ENCODE measurements at regions of chr7 and their contacts with region 1.

Region 1: GRCh38 chr7:100874577-100875355 is at the start of gene SRRT:
- DNase-seq: peak; percentile 97
- ATAC-seq: peak; percentile 93
- H3K4me3 Mint-ChIP-seq: peak within 1 kb of the TSS; percentile 97
- H3K27ac Mint-ChIP-seq: peak within 1 kb of the TSS; percentile 98
- H3K4me1 Mint-ChIP-seq: peaks cover 41% of the 10 kb centered on the region
- H3K27me3 Mint-ChIP-seq: no peaks in the 10 kb centered on the region
- total RNA-seq, gene SRRT: 251 to 255 TPM

Region 2: GRCh38 chr7:100745184-100745583 is 129.6 kb before region 1 on chr7:
- POLR2A ChIA-PET with region 1: no interaction called
- DNase-seq: peak; percentile 51
- ATAC-seq: peak; percentile 78
- H3K4me3 Mint-ChIP-seq: peak overlapping the region; percentile 88
- H3K27ac Mint-ChIP-seq: peak overlapping the region; percentile 69
- H3K4me1 Mint-ChIP-seq: peaks cover 4% of the 10 kb centered on the region
- H3K27me3 Mint-ChIP-seq: peaks cover 22% of the 10 kb centered on the region

Region 3: GRCh38 chr7:100852048-100852872 is 22.5 kb before region 1 on chr7 and contains the start of gene SLC12A9:
- POLR2A ChIA-PET with region 1: interaction called, 25 read pairs
- DNase-seq: peak; percentile 94
- ATAC-seq: peak; percentile 98
- H3K4me3 Mint-ChIP-seq: peak within 1 kb of the TSS; percentile 94
- H3K27ac Mint-ChIP-seq: peak within 1 kb of the TSS; percentile 80
- H3K4me1 Mint-ChIP-seq: peaks cover 10% of the 10 kb centered on the region
- H3K27me3 Mint-ChIP-seq: no peaks in the 10 kb centered on the region
- total RNA-seq, gene SLC12A9: 39.0 to 41.2 TPM

Region 4: GRCh38 chr7:100884736-100885439 is 10.1 kb after region 1 on chr7:
- POLR2A ChIA-PET with region 1: interaction called, 176 read pairs
- DNase-seq: no peak
- ATAC-seq: no peak
- H3K4me3 Mint-ChIP-seq: peak overlapping the region; percentile 16
- H3K27ac Mint-ChIP-seq: peak overlapping the region; percentile 46
- H3K4me1 Mint-ChIP-seq: peaks cover 36% of the 10 kb centered on the region
- H3K27me3 Mint-ChIP-seq: no peaks in the 10 kb centered on the region

Region 5: DNA sequence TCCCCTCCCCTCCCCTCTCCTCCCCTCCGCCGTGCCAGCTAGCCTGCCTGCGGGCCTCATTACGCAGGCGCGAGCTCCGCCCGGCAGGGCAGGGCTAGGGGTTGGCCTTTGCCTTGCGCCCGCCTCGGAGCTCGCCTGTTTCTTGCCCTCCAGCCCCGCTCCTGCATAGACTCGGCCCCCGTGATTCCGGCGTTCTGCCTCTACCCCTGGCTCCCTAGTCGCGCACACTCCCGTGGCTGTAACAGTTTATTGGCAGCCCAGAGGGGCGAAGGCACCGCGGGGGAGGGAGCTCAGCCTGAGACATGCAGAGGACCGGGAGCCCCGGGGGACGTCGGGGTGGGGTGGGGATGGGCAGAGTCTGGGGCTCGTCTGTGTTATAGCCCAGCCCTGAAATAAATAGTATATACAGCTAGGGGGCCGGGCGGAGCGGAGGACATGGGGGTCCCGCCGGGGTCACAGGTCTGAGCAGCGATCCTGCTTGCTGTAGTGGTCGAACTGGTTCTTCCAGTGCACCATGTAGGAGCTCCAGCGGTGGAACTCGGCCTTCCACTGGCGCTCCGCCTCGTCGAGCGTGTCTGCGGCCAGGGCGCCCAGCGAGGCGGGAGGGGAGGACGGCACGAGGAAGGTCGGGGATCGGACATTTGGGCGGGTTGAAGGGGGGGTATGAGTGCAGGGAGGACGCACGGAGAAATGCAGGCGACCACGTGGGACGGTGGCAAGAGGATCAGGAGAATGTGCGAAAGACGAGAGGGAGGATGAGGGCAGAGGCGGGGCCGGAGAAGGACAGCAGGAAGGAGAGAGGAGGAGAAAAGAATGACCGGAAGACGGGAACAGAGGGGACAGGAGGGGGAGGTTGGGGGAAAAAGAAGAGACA is 15.2 kb after region 1 on chr7:
- POLR2A ChIA-PET with region 1: interaction called, 176 read pairs
- DNase-seq: peak; percentile 93
- ATAC-seq: peak; percentile 91
- H3K4me3 Mint-ChIP-seq: peak overlapping the region; percentile 85
- H3K27ac Mint-ChIP-seq: peak overlapping the region; percentile 69
- H3K4me1 Mint-ChIP-seq: peaks cover 36% of the 10 kb centered on the region
- H3K27me3 Mint-ChIP-seq: peaks cover 24% of the 10 kb centered on the region

Region 6: GRCh38 chr7:101217388-101218235 is 342.8 kb after region 1 on chr7 and contains the starts of genes PLOD3 and ZNHIT1:
- POLR2A ChIA-PET with region 1: interaction called, 11 read pairs
- DNase-seq: peak; percentile 91
- ATAC-seq: peak; percentile 79
- H3K4me3 Mint-ChIP-seq: peak within 1 kb of the TSS; percentile 90
- H3K27ac Mint-ChIP-seq: peak within 1 kb of the TSS; percentile 88
- H3K4me1 Mint-ChIP-seq: peaks cover 22% of the 10 kb centered on the region
- H3K27me3 Mint-ChIP-seq: no peaks in the 10 kb centered on the region
- total RNA-seq, gene PLOD3: 48.9 to 51.0 TPM
- total RNA-seq, gene ZNHIT1: 54.2 to 55.8 TPM